ENCODE measurements at regions of chr17 and their contacts with region 1.

Region 1: GRCh38 chr17:7931709-7932482 is at the starts of genes CNTROB and TRAPPC1:
- DNase-seq: peak; percentile 97
- H3K4me3 ChIP-seq: peak within 1 kb of the TSS; percentile 68
- H3K27me3 ChIP-seq: no peaks in the 10 kb centered on the region
- CTCF ChIP-seq: no peak
- polyA plus RNA-seq, gene CNTROB: 19.4 and 26.8 TPM in 2 replicates
- polyA plus RNA-seq, gene TRAPPC1: 204 and 264 TPM in 2 replicates

Region 2: GRCh38 chr17:7944326-7944725 is 12.4 kb after region 1 on chr17:
- CTCF ChIA-PET with region 1: interaction called, 15 read pairs
- POLR2A ChIA-PET with region 1: no interaction called
- DNase-seq: no peak
- H3K4me3 ChIP-seq: no peak overlapping the region
- H3K27me3 ChIP-seq: no peaks in the 10 kb centered on the region
- CTCF ChIP-seq: no peak

Region 3: DNA sequence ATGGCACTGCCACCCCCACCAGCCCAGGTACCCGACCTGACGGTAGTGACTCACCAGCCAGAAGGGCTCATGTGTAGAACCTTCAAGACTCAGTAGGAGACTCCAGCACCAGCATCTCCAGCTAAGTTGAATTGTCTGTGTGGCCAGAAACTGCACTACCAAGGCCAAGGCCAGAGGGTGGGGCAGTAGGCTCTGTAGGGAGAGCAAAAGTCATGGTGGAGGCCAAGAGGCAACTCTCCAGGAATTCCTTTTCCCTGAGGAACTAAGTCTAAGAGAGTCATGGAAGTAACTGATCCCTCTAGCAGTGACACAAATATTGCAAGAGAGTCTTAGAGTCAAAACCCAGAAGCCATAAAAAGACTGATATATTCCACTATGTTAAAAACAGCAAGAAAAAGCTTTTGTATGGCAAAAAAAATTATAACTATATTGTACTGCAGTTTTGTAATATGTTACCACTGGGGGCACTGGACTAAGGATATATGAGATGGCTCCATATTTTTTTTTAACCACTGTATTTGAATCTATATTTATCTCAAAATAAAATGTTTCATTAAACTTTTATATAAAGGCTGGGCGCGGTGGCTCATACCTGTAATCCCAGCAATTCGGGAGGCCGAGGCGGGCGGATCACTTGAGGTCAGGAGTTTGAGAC is 40.4 kb after region 1 on chr17:
- CTCF ChIA-PET with region 1: interaction called, 11 read pairs
- POLR2A ChIA-PET with region 1: no interaction called
- DNase-seq: no peak
- H3K4me3 ChIP-seq: no peak overlapping the region
- H3K27me3 ChIP-seq: peaks cover 4% of the 10 kb centered on the region
- CTCF ChIP-seq: no peak; the same call in none of the 2 replicates

Region 4: DNA sequence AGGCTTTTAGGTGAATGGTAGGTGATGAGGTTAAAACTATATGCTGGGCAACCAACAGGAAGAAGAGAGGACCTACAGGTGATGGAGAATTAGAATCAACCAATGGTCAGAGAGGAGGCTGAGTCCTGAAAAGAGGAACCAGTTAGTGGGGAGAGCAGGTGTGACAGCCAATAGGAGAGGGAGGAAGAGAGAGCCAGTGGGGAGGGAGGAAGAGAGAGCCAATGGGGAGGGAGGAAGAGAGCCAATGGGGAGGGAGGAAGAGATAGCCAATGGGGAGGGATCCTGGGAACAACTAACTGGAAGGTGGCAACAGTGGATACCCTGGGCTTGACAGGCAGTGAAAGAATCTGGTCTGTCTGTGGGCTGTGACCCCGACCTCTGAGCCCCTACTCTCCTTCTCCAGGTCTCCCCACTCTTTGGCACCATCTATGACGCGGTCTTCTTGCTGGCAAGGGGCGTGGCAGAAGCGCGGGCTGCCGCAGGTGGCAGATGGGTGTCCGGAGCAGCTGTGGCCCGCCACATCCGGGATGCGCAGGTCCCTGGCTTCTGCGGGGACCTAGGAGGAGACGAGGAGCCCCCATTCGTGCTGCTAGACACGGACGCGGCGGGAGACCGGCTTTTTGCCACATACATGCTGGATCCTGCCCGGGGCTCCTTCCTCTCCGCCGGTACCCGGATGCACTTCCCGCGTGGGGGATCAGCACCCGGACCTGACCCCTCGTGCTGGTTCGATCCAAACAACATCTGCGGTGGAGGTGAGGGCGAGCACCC is 74.2 kb after region 1 on chr17:
- CTCF ChIA-PET with region 1: no interaction called
- POLR2A ChIA-PET with region 1: no interaction called
- DNase-seq: no peak
- H3K4me3 ChIP-seq: no peak overlapping the region
- H3K27me3 ChIP-seq: peaks cover 19% of the 10 kb centered on the region
- CTCF ChIP-seq: no peak

Measured in BJ (cell line).